ENCODE measurements at regions of chr16 and their contacts with region 1.

Region 1: DNA sequence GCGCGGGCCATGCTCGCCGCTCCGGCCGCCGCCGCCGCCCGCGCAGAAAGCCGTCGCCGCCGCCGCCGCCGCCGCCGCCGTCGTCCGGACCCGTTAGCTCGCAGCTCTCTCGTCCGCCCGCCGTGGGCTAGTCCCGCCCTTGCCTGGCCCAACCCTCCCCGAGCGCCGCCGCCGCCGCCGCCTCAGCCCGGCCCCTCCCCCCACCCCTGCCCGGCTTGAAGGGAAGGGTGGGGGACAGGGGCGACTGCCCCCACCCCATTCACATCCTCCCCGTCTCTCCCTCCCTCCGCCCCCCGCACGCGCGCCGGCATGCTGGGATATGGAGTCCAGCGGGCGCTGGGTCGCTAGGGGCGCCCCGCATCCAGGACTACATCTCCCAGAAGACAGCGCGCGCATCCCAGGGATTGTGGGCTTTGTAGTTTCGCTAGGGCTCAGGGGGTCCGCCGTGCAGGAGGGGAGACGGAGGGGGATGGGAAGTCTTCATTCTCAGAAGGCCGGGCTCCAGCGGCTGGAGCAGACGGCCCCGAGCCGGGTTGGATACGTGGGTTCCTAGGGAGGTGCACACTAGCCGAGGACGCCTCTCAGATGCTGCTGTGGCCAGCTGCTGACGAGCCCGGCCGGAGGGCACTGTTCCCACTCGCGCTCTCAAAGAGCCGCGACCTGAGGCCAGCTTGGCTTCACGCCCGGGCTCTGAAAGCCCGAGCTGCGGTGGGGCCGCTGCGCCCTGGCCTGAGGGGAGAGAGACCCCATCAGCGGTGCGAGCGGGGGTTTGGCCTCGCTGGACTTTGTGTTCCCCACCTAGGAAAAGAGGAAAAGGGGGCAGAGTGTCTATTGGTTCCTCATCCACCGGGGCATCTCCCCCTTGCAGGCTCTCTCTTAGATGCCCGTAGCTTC is at the start of gene ST3GAL2:
- DNase-seq: peak; percentile 95 to 96
- ATAC-seq: peak; percentile 98 to 99 (median 98)
- H3K4me3 ChIP-seq: peak within 1 kb of the TSS; percentile 64 to 91 (median 79)
- H3K27ac ChIP-seq: peak within 1 kb of the TSS; percentile 72 to 89 (median 83)
- H3K4me1 ChIP-seq: peaks cover 3 to 50% (median 38%) of the 10 kb centered on the region in 9 donors
- H3K27me3 ChIP-seq: no peaks in the 10 kb centered on the region
- CTCF ChIP-seq: peak in 5 of 9 donors; percentile 15 to 39 (median 32)
- total RNA-seq, gene ST3GAL2: 15.1 to 37.1 (median 20.9) TPM

Region 2: DNA sequence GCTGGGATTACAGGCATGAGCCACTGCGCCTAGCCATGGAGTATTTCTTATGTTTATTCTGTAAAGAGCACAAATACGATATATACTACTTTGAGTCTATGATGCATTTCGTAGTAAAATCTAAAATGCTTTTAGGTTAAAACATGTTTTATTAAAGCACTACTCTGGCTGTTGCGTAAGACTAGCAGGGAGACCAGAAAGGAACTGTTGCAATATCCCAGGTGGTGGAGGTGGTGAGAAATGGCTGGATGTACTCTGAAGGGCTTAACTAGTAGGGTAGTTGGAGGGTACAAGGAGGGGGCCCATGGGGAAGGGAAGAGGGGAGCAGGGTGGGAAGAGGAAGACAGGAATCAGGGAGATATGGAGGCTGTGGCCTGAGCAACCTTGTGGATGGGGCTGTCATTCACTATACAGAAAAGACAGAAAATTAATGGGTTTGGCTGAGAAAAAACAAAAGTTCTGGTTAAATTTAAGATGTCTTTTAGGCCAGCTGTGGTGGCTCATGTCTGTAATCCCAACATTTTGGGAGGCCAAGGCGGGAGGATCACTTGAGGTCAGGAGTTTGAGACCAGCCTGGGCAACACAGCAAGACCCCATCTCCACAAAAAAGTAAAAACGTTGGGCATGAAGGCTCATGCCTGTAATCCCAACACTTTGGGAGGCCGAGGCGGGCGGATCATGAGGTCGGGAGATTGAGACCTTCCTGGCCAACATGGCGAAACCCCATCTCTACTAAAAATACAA is 36.1 kb before region 1 on chr16:
- intact Hi-C with region 1: loop called in 1 of 10 experiments (anchors 5 kb)
- DNase-seq: no peak
- ATAC-seq: no peak
- H3K4me3 ChIP-seq: no peak overlapping the region
- H3K27ac ChIP-seq: peak overlapping the region in 1 of 10 donors; percentile 81
- H3K4me1 ChIP-seq: peaks cover 0 to 34% (median 7%) of the 10 kb centered on the region in 9 donors
- H3K27me3 ChIP-seq: no peaks in the 10 kb centered on the region
- CTCF ChIP-seq: no peak

Region 3: DNA sequence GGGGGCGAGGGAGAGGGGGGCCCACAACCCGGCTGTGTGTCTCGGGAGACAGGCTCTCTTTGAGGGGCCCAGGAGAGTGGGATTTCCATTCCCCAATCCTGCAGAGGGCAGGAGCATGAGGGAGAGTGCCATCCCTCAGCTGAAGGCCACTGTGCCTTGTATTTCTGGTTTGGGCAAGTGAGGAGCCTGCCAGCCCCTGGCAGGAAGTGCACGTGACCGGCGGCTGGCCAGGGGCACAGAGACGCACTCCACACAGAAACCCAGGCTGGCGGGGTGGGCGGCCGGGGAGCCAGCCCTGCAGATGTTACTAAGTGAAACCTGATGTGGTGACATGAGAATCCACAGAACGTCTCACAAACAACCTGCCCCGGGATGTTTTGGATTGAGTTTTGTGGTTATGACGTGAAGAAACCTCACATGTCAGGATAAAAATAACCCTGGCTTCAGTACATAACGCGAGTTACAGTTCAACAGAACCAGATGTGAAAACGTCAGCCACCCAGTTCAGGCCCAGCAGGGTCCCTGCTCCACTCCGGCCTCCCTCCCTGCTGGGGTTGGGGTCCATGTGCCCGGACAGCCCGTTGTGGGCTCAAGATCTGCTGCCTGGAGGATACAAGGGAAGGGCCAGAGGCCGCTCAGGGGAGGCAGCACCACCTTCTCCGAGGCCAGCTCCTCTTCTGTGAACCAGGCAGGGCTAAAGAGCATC is 298.3 kb after region 1 on chr16:
- intact Hi-C with region 1: no loop called
- DNase-seq: peak; percentile 74 to 76
- ATAC-seq: peak; percentile 60 to 85 (median 72)
- H3K4me3 ChIP-seq: peak overlapping the region in 1 of 10 donors; percentile 8
- H3K27ac ChIP-seq: peak overlapping the region; percentile 81 to 92 (median 86)
- H3K4me1 ChIP-seq: peaks cover 32 to 75% (median 45%) of the 10 kb centered on the region in 9 donors
- H3K27me3 ChIP-seq: no peaks in the 10 kb centered on the region
- CTCF ChIP-seq: peak in 1 of 9 donors; percentile 17

Measured in heart right ventricle (tissue), 16 donors.